Naive thymus-derived CD4-positive, alpha-beta T cell (primary cell): ENCODE measurements at regions of chr15 and their contacts with region 1.

Region 1: DNA sequence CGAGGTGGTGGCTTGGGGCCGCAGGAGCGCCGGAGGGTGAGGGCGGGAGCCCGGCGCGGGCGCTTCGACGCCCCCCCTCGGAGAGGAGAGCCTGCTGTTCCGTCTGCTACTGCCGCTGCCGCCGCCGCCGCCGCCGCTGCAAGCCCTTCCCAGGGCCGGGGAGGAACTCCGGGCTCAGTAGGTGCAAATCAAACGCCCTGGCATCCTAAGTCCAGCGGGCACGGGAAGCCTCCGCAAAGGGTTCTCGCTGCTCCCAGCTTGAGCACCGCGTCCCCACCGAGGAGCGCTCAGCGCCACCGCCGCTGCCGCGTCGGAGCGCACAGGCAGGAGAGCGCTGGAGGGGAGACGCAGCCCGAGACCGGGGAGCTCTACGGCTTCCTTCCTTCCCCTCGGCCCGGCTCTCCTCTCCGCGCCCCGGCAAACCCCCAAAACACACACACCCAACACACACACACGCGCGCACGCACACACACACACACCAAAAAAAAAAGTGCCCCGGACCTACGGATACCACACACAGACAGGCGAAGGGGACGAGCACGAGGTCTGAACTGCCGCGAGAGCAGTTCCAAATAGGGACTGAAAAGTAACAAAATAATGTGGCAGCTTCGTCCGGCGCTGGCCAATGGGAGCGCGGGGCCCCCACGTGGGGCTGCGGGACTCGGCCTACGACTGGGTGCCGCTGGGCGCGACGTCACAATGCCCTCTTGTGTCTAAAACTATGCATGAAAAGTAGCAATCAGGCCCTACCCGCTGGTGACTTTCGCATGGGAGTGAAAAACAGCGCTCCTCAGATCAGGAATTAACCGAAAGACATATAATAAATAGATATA is at the start of gene TLE3:
- DNase-seq: peak; percentile 94 to 99 (median 98)
- ATAC-seq: peak; percentile 72
- H3K4me3 ChIP-seq: peak within 1 kb of the TSS; percentile 87
- H3K4me3 Mint-ChIP-seq: peak within 1 kb of the TSS; percentile 91 to 100 (median 99)
- H3K27ac ChIP-seq: peak within 1 kb of the TSS; percentile 87
- H3K27ac Mint-ChIP-seq: peak within 1 kb of the TSS; percentile 96 to 100 (median 98)
- H3K4me1 ChIP-seq: peaks cover 33 to 44% of the 10 kb centered on the region in 2 donors
- H3K4me1 Mint-ChIP-seq: peaks cover 34 to 62% (median 39%) of the 10 kb centered on the region in 7 donors
- H3K27me3 ChIP-seq: no peaks in the 10 kb centered on the region
- H3K27me3 Mint-ChIP-seq: peaks cover 0 to 27% (median 4%) of the 10 kb centered on the region in 5 donors
- total RNA-seq, gene TLE3: 84.5 to 183 (median 120) TPM

Region 2: DNA sequence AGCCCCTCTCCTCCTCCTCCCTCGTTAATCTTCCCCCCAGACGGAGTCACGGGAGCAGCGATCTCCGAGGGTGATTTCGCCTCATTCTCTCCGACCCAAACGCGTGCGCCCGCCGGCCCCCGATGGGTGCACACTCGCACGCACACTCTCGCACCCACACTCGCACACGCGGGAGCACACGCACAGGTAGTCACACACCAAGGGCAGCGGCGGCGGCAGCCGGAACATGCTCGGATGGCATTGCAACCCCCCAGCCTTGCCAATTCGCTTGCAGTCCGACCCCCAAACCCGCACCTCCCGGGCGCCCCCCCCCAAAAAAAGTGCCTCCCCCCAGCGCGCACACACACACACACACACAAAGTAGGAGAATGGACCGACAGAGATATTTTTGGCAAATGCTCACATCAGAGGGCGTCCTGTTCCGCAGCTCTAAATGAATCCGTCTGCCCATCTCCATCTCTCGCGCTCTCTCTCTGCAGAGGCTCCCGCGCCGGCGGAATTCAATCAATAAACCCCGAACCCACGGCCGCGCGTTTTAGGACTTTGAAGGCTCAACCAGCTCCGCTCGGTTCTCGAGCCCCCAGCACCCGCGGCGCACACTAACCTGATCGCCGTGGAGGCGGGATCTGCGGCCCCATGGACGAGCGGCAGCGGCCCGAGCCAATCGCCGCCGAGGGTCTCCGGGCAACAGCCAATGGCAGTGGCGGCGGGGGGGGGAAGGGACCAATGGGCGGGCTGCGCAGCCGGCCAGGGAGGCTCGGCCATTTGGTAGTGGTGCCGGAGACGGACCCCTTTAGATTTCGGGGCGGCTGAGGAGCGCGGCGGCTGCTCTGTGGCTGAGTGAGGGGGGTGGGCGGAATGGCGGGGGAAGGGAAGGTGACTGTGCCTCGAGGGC is 1277.0 kb before region 1 on chr15 and contains the start of gene ANP32A:
- CTCF ChIA-PET with region 1: no interaction called
- POLR2A ChIA-PET with region 1: interaction called, 3 read pairs
- intact Hi-C with region 1: loop called in 1 of 2 experiments (anchors 2 kb)
- DNase-seq: peak; percentile 90 to 99 (median 95)
- ATAC-seq: peak; percentile 85
- H3K4me3 ChIP-seq: peak within 1 kb of the TSS; percentile 99
- H3K4me3 Mint-ChIP-seq: peak within 1 kb of the TSS; percentile 85 to 100 (median 92)
- H3K27ac ChIP-seq: peak within 1 kb of the TSS; percentile 91
- H3K27ac Mint-ChIP-seq: peak within 1 kb of the TSS; percentile 84 to 100 (median 92)
- H3K4me1 ChIP-seq: peaks cover 19 to 23% of the 10 kb centered on the region in 2 donors
- H3K4me1 Mint-ChIP-seq: peaks cover 22 to 37% (median 34%) of the 10 kb centered on the region in 7 donors
- H3K27me3 ChIP-seq: no peaks in the 10 kb centered on the region
- H3K27me3 Mint-ChIP-seq: no peaks in the 10 kb centered on the region
- total RNA-seq, gene ANP32A: 86.1 to 229 (median 136) TPM

Region 3: GRCh38 chr15:69468241-69469121 is 629.1 kb before region 1 on chr15:
- CTCF ChIA-PET with region 1: no interaction called
- POLR2A ChIA-PET with region 1: interaction called, 9 read pairs
- intact Hi-C with region 1: loop called (anchors 1 kb)
- DNase-seq: peak; percentile 49 to 92 (median 84)
- ATAC-seq: peak; percentile 95
- H3K4me3 ChIP-seq: peak overlapping the region; percentile 3
- H3K4me3 Mint-ChIP-seq: peak overlapping the region; percentile 46 to 78 (median 63)
- H3K27ac ChIP-seq: peak overlapping the region; percentile 82
- H3K27ac Mint-ChIP-seq: peak overlapping the region; percentile 86 to 98 (median 94)
- H3K4me1 ChIP-seq: peaks cover 22 to 27% of the 10 kb centered on the region in 2 donors
- H3K4me1 Mint-ChIP-seq: peaks cover 17 to 36% (median 22%) of the 10 kb centered on the region in 7 donors
- H3K27me3 ChIP-seq: no peaks in the 10 kb centered on the region
- H3K27me3 Mint-ChIP-seq: peaks cover 0 to 32% (median 0%) of the 10 kb centered on the region in 5 donors

Region 4: GRCh38 chr15:69713726-69714559 is 383.6 kb before region 1 on chr15:
- CTCF ChIA-PET with region 1: no interaction called
- POLR2A ChIA-PET with region 1: interaction called, 44 read pairs
- intact Hi-C with region 1: loop called (anchors 1 kb)
- DNase-seq: peak in 8 of 9 donors; percentile 60 to 80 (median 70)
- ATAC-seq: peak; percentile 88
- H3K4me3 ChIP-seq: no peak overlapping the region
- H3K4me3 Mint-ChIP-seq: peak overlapping the region; percentile 52 to 80 (median 72)
- H3K27ac ChIP-seq: no peak overlapping the region
- H3K27ac Mint-ChIP-seq: peak overlapping the region; percentile 71 to 90 (median 78)
- H3K4me1 ChIP-seq: peaks cover 32 to 50% of the 10 kb centered on the region in 2 donors
- H3K4me1 Mint-ChIP-seq: peaks cover 31 to 63% (median 54%) of the 10 kb centered on the region in 7 donors
- H3K27me3 ChIP-seq: no peaks in the 10 kb centered on the region
- H3K27me3 Mint-ChIP-seq: peaks cover 0 to 22% (median 0%) of the 10 kb centered on the region in 5 donors

Region 5: GRCh38 chr15:69760890-69761568 is 336.5 kb before region 1 on chr15:
- CTCF ChIA-PET with region 1: interaction called, 4 read pairs
- POLR2A ChIA-PET with region 1: interaction called, 61 read pairs
- intact Hi-C with region 1: loop called (anchors 1 kb)
- DNase-seq: peak; percentile 34 to 88 (median 81)
- ATAC-seq: peak; percentile 84
- H3K4me3 ChIP-seq: peak overlapping the region; percentile 34
- H3K4me3 Mint-ChIP-seq: peak overlapping the region; percentile 51 to 86 (median 67)
- H3K27ac ChIP-seq: no peak overlapping the region
- H3K27ac Mint-ChIP-seq: peak overlapping the region; percentile 48 to 95 (median 88)
- H3K4me1 ChIP-seq: peaks cover 57 to 61% of the 10 kb centered on the region in 2 donors
- H3K4me1 Mint-ChIP-seq: peaks cover 52 to 79% (median 70%) of the 10 kb centered on the region in 7 donors
- H3K27me3 ChIP-seq: no peaks in the 10 kb centered on the region
- H3K27me3 Mint-ChIP-seq: peaks cover 0 to 25% (median 7%) of the 10 kb centered on the region in 5 donors

Region 6: DNA sequence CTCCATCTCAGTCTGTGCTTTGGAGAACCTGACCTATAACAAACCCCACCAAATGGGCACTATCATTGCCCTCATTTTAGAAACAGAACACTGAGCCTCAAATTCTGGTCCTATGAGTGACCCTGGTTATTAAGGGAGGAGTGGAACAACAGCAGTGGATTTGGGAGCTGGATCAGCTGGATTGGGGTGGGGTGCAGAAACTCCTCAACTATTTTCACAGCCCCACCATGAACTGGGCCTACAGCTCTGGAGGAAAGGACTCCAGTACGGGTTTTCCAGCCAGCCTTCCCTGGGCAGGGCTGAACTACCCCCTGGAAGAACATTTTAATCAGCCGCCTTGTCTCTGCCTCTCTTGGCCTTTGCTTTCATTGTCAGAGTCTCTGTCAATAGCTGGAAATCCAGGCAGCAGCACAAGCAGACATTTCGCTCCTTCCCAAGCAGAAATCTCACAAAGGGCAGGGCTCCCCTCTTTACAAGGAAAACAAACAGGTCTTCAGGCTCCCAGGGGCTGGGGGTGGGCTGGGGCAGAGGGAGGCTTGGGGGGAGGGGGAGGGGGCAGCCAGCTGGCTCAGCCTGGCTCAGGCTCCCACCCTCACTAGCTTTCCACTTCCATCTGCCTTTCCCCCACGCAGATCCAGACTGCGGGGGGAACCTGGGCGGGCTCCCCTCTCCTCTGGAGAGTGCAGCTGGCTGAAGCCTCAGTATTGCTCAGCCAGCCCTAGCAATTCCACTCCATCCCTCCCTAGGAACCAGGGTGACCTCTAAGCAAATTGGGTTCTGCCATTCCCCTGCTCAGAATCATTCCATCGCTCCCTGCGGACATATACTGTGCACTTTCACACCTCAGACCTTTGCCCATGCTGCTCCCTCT is 13.9 kb after region 1 on chr15:
- CTCF ChIA-PET with region 1: no interaction called
- POLR2A ChIA-PET with region 1: interaction called, 15 read pairs
- intact Hi-C with region 1: no loop called
- DNase-seq: no peak
- ATAC-seq: no peak
- H3K4me3 ChIP-seq: no peak overlapping the region
- H3K4me3 Mint-ChIP-seq: no peak overlapping the region
- H3K27ac ChIP-seq: no peak overlapping the region
- H3K27ac Mint-ChIP-seq: no peak overlapping the region
- H3K4me1 ChIP-seq: no peaks in the 10 kb centered on the region
- H3K4me1 Mint-ChIP-seq: peaks cover 0 to 12% (median 4%) of the 10 kb centered on the region in 7 donors
- H3K27me3 ChIP-seq: no peaks in the 10 kb centered on the region
- H3K27me3 Mint-ChIP-seq: peaks cover 4 to 58% (median 5%) of the 10 kb centered on the region in 5 donors

Region 7: GRCh38 chr15:70528270-70528706 is 430.7 kb after region 1 on chr15:
- CTCF ChIA-PET with region 1: interaction called, 4 read pairs
- POLR2A ChIA-PET with region 1: interaction called, 5 read pairs
- intact Hi-C with region 1: loop called in 1 of 2 experiments (anchors 1 kb)
- DNase-seq: peak in 8 of 9 donors; percentile 62 to 81 (median 77)
- ATAC-seq: peak; percentile 92
- H3K4me3 ChIP-seq: peak overlapping the region; percentile 55
- H3K4me3 Mint-ChIP-seq: peak overlapping the region; percentile 78 to 86 (median 82)
- H3K27ac ChIP-seq: peak overlapping the region; percentile 65
- H3K27ac Mint-ChIP-seq: peak overlapping the region; percentile 87 to 99 (median 95)
- H3K4me1 ChIP-seq: peaks cover 36 to 64% of the 10 kb centered on the region in 2 donors
- H3K4me1 Mint-ChIP-seq: peaks cover 42 to 99% (median 89%) of the 10 kb centered on the region in 7 donors
- H3K27me3 ChIP-seq: no peaks in the 10 kb centered on the region
- H3K27me3 Mint-ChIP-seq: peaks cover 0 to 4% (median 0%) of the 10 kb centered on the region in 5 donors